CD4-positive, alpha-beta memory T cell (primary cell): ENCODE measurements at regions of chr10 and their contacts with region 1.

Region 1: GRCh38 chr10:120336911-120337540 is 120.0 kb upstream of the PLPP4 start:
- DNase-seq: peak; percentile 14 to 42 (median 33)
- H3K4me3 ChIP-seq: no peak overlapping the region
- H3K4me3 Mint-ChIP-seq: no peak overlapping the region
- H3K27ac ChIP-seq: no peak overlapping the region
- H3K27ac Mint-ChIP-seq: no peak overlapping the region
- H3K4me1 ChIP-seq: no peaks in the 10 kb centered on the region
- H3K4me1 Mint-ChIP-seq: no peaks in the 10 kb centered on the region
- H3K27me3 ChIP-seq: no peaks in the 10 kb centered on the region
- H3K27me3 Mint-ChIP-seq: peaks cover 4 to 7% of the 10 kb centered on the region in 2 donors

Region 2: DNA sequence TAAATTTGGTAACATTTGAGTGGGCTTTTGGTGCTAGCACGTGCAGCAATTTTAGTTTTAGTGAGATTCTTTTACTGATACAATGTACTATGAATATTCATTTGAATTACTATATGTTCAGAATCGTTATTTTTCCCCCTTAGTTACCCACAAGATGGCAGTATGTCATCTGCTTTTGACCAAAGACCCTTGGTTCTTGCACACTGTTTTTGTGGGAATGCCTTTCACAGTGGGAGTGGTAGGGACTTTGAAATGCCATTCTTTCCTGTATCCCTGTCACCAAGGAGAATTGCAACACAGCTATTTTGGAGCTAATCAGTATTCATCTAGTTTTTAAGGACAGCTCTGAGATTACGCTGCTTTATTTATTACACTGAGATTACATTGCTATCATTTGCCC is 403.8 kb before region 1 on chr10:
- CTCF ChIA-PET with region 1: no interaction called
- POLR2A ChIA-PET with region 1: no interaction called
- intact Hi-C with region 1: loop called (anchors 5 kb)
- DNase-seq: no peak
- H3K4me3 ChIP-seq: no peak overlapping the region
- H3K4me3 Mint-ChIP-seq: no peak overlapping the region
- H3K27ac ChIP-seq: no peak overlapping the region
- H3K27ac Mint-ChIP-seq: peak overlapping the region in 1 of 7 donors; percentile 7
- H3K4me1 ChIP-seq: peaks cover 8% of the 10 kb centered on the region
- H3K4me1 Mint-ChIP-seq: peaks cover 5 to 25% (median 9%) of the 10 kb centered on the region in 4 donors
- H3K27me3 ChIP-seq: no peaks in the 10 kb centered on the region
- H3K27me3 Mint-ChIP-seq: no peaks in the 10 kb centered on the region

Region 3: GRCh38 chr10:120400601-120401000 is 63.6 kb after region 1 on chr10:
- CTCF ChIA-PET with region 1: no interaction called
- POLR2A ChIA-PET with region 1: no interaction called
- intact Hi-C with region 1: no loop called
- DNase-seq: no peak
- H3K4me3 ChIP-seq: no peak overlapping the region
- H3K4me3 Mint-ChIP-seq: no peak overlapping the region
- H3K27ac ChIP-seq: no peak overlapping the region
- H3K27ac Mint-ChIP-seq: no peak overlapping the region
- H3K4me1 ChIP-seq: no peaks in the 10 kb centered on the region
- H3K4me1 Mint-ChIP-seq: peaks cover 0 to 1% (median 0%) of the 10 kb centered on the region in 4 donors
- H3K27me3 ChIP-seq: no peaks in the 10 kb centered on the region
- H3K27me3 Mint-ChIP-seq: peaks cover 2% of the 10 kb centered on the region in 2 donors